ENCODE measurements at regions of chr1 and their contacts with region 1.

Region 1: DNA sequence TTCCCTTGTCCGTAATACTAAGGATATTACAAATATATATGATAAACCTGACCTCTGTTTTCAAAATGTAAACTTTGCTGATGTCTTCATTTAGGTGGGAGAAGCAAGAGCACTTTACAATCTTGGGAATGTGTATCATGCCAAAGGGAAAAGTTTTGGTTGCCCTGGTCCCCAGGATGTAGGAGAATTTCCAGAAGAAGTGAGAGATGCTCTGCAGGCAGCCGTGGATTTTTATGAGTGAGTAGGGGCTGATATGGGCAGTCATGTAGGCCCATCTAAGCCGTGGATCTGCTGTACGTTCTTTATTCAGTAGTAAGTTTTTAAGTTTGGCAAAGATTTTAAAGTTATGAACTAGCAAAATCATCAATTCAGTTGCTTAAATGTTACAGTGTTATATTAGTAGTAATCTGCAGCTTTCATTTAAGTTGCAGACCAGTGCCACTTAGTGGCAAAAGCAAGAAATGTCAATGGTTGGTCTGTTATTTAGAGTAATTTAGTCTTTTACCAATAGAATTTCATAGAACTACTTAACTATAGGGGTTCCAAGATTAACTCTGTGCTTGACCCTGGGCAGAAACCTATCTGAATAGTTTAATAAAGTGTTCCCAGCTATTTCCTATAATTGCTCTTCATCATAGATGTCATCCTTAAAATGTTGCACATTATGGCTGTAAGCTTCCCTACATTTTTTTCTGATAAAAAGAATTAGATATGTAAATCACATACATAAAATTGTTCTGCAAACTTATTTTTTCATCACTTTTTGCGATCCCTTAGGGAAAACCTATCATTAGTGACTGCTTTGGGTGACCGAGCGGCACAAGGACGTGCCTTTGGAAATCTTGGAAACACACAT is 21.3 kb downstream of the GPSM2 start:
- DNase-seq: peak in 3 of 10 donors; percentile 10 to 56 (median 22)
- H3K4me3 ChIP-seq: peak overlapping the region in 4 of 59 donors; percentile 6 to 25 (median 17)
- H3K27ac ChIP-seq: peak overlapping the region in 40 of 59 donors; percentile 7 to 86 (median 67)
- H3K27me3 ChIP-seq: no peaks in the 10 kb centered on the region
- CTCF ChIP-seq: peak; percentile 67 to 95 (median 83)

Region 2: DNA sequence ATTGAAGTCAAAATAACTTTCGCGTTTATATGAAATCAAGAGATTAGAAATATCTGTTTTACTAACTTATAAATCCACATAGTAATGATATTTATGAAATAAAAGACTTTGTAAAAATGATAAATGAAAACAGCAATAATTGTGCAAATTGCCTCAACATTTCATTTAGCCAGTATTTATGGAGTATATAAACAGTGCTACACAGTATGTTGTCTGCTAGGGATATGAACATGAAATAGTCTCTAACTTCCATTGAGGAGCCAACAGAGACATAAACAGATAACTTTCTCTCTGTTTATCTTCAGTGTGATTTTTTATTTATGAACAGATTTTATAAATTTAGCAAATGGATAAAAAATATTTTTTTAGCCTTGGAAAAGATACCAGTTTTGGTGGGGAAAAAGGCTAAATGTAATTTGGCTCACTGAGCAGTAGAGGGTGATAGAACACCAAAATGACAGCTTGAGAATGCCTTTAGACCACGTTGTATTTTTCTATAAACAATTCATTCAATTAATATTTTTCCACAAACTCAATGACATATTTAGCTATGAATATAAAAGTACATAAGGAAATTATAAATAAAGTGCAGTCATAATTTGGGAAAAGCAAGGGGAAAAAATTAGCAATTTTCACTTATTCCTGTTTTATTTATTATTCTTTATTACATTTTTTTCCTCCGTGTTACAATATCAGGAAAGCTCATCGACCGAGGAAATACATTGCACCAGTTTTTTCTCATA is 385.7 kb before region 1 on chr1:
- intact Hi-C with region 1: loop called in 1 of 2 experiments (anchors 10 kb)
- DNase-seq: no peak
- H3K4me3 ChIP-seq: peak overlapping the region in 4 of 59 donors; percentile 2 to 22 (median 10)
- H3K27ac ChIP-seq: no peak overlapping the region
- H3K27me3 ChIP-seq: no peaks in the 10 kb centered on the region
- CTCF ChIP-seq: peak; percentile 57 to 95 (median 86)

Region 3: DNA sequence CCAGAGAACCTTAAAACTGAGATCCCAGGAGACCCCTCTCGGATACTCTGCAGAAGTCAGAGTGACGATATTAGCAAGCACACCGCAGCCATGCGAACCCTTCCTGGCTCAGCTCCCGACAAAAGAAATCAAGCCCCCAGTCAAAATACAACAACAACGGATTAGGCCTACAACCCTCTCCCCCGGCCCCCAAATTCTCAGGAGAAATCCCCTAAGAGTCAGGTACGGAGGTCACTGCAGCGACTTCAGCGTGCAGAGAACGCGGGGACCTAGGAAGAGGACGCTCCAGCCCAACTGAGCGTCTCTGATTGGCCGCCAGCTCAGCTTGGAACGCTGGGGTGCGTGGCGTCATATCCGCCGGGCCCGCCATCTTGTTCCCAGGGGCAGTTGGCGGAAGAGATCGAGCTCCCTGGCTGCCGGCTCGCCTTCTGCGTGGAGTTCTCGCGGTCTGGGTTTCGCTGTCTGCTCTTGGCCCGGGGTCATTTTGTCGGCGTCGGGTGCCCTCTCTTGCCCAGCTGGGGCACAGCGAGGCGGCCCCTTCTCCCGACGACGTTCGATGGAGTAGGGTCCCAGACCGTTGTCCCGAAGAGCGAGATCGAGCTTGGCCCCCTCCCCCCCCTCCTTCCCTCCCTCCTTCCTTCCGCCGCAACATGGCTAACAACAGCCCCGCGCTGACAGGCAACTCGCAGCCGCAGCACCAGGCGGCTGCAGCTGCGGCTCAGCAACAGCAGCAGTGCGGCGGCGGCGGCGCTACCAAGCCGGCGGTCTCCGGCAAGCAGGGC is 206.0 kb before region 1 on chr1 and contains the start of gene PRPF38B:
- intact Hi-C with region 1: loop called (anchors 2 to 5 kb)
- DNase-seq: peak; percentile 94 to 97 (median 96)
- H3K4me3 ChIP-seq: peak within 1 kb of the TSS; percentile 53 to 96 (median 87)
- H3K27ac ChIP-seq: peak within 1 kb of the TSS; percentile 91 to 99 (median 98)
- H3K27me3 ChIP-seq: no peaks in the 10 kb centered on the region
- CTCF ChIP-seq: peak in 24 of 56 donors; percentile 8 to 51 (median 26)
- total RNA-seq, gene PRPF38B: 22.4 to 46.1 (median 32.8) TPM

Region 4: DNA sequence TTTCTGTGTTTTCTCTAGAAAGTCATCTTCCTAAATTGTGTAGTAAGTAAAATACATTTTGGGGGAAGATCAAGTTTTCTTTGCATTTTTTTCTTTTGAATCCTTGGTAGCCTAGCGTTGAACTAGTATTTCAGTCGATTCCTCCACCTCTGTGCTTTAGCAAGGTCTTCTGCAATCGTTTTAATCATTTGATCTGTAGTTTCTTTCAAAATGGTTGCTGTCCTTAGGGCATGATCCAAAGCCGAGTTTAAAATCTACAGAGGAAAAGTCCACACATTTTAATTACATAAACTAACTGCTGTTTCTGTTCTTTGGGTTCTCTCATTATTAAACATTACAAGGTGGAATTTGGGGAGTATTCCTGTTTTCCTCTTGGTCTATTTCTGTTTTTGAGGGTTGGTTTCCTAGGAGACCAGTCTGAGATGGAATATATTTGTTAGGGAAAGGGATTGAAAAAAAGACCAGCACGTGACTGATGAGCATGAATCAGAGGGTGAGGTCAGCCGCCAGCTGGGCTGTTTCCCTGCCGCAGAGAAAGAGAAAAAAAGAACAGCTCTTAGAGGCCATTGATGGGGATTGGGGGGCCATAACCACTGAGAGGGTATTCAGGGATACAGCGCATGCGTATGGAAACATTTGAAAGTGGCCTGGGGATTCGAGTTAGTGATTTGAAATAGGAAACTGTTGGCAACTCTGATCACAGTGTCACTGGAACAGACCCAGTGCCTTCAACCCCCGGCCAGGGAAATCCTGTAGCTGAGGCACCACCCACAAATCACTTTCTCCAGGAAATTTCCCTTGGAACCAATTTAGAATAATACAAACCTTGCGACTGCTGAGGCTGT is 81.8 kb before region 1 on chr1:
- intact Hi-C with region 1: loop called in 1 of 2 experiments (anchors 5 kb)
- DNase-seq: peak; percentile 63 to 90 (median 83)
- H3K4me3 ChIP-seq: peak overlapping the region; percentile 16 to 63 (median 44)
- H3K27ac ChIP-seq: peak overlapping the region; percentile 80 to 100 (median 97)
- H3K27me3 ChIP-seq: no peaks in the 10 kb centered on the region
- CTCF ChIP-seq: peak in 8 of 56 donors; percentile 3 to 31 (median 10)

Region 5: GRCh38 chr1:108828022-108828961 is 69.8 kb before region 1 on chr1:
- intact Hi-C with region 1: loop called in 1 of 2 experiments (anchors 2 kb)
- DNase-seq: peak; percentile 59 to 88 (median 78)
- H3K4me3 ChIP-seq: peak overlapping the region in 16 of 59 donors; percentile 3 to 46 (median 18)
- H3K27ac ChIP-seq: peak overlapping the region in 54 of 59 donors; percentile 6 to 95 (median 83)
- H3K27me3 ChIP-seq: no peaks in the 10 kb centered on the region
- CTCF ChIP-seq: peak; percentile 56 to 92 (median 82)

Region 6: DNA sequence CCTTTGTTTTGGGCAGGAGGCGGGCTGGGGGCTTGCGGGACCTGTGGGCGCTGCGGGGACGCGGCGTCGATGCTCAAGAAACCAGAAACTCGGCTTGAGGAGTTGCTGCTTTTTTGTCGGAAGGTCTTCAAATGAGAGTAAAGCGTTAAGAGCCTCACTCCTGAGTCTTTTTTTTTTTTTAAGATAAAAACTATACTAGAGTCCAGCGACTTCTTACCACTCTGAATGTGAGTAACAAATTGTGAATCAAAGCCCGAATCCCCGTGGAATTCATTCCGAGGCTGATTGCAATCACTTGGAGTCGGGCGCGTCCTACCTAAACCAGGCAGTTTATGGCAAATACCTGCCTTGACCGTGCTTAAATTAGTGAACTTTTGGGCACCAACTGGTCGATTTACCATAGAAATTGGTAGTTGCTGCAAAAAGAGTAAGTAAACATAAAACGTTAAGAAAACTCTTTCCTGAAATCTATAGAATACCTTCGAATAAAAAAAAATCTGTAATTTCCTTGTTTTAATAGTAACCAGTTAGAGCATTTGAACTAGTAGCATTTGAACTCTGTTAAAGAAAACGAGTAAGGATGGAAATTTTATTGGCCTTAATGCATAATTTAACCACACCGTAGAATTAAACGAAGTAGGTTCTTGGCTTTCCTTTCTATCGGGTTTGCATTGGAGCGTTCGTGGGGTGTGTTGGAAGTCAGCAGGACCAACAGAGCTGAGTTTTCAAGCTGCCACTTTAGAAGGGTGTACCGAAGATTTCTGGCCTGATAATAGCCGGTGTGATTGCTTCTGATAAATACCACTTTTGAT is 20.5 kb before region 1 on chr1:
- intact Hi-C with region 1: loop called in 1 of 2 experiments (anchors 2 kb)
- DNase-seq: peak in 2 of 10 donors; percentile 28 to 32
- H3K4me3 ChIP-seq: peak overlapping the region; percentile 61 to 97 (median 85)
- H3K27ac ChIP-seq: peak overlapping the region in 57 of 59 donors; percentile 7 to 99 (median 92)
- H3K27me3 ChIP-seq: no peaks in the 10 kb centered on the region
- CTCF ChIP-seq: no peak